Tibial artery (tissue), 4 donors: ENCODE measurements at regions of chr1 and their contacts with region 1.

Region 1: DNA sequence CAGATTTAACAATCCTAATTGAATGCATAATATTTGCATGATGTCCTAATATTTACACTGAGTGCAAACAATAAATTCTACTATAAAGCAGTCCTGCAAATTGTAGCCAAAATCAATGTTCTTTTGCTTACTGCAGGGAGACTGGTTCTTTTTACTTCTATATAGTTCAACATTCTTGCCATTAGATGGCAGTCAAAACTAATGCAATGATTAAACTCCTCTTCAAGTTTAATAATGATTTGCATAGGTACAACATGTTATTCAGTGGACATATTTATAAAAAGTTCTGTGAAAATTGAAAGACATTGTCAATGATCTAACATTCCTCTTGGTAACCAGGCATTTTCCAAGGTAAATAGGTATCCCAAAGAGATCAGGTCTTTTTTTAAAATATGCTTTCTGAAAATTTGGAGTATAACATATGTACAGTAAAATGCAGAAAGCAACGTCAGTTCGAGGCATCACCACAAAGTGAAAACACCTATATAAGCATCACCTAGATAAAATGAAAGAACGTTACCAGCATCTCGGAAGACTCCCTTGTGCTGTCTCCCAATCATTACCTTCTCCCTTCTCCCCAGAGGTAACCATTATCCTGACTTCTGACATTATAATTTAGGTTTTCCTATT is 9.8 kb upstream of the FNBP1L start:
- DNase-seq: no peak
- H3K4me3 ChIP-seq: no peak overlapping the region
- H3K27ac ChIP-seq: no peak overlapping the region
- H3K4me1 ChIP-seq: no peaks in the 10 kb centered on the region
- H3K27me3 ChIP-seq: peaks cover 0 to 7% of the 10 kb centered on the region in 2 donors
- CTCF ChIP-seq: peak; percentile 66 to 76

Region 2: DNA sequence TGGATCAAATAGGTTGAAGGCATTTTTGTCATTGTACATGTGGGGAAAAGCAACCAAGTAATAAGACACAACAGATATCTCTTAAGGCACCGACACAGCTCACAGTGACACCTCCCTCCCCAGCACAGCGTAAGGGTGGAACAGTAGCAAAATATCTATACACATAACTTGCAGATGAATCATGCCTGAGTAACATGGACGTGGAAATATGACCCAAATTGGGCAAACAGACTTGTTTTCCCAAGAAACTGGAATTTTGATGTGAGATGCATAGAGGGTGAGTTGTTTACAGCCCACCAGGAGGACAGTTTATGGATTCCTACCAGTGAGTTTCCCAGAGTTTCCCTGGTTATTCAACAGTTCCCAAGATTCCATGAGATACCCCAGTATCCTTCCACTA is 99.7 kb before region 1 on chr1:
- intact Hi-C with region 1: no loop called
- DNase-seq: no peak
- H3K4me3 ChIP-seq: no peak overlapping the region
- H3K27ac ChIP-seq: peak overlapping the region in 1 of 2 donors; percentile 3
- H3K4me1 ChIP-seq: peaks cover 0 to 11% (median 0%) of the 10 kb centered on the region in 4 donors
- H3K27me3 ChIP-seq: no peaks in the 10 kb centered on the region
- CTCF ChIP-seq: no peak

Region 3: GRCh38 chr1:93814059-93814794 is 376.1 kb after region 1 on chr1:
- intact Hi-C with region 1: loop called (anchors 5 kb)
- DNase-seq: peak in 1 of 2 donors; percentile 53
- H3K4me3 ChIP-seq: no peak overlapping the region
- H3K27ac ChIP-seq: no peak overlapping the region
- H3K4me1 ChIP-seq: peaks cover 0 to 17% (median 8%) of the 10 kb centered on the region in 4 donors
- H3K27me3 ChIP-seq: no peaks in the 10 kb centered on the region
- CTCF ChIP-seq: peak; percentile 98 to 99